ENCODE measurements at regions of chr20 and their contacts with region 1.

Region 1: GRCh38 chr20:833450-834150 is at the start of gene FAM110A:
- DNase-seq: peak; percentile 98
- ATAC-seq: peak; percentile 89
- H3K4me3 Mint-ChIP-seq: peak within 1 kb of the TSS; percentile 88
- H3K27ac Mint-ChIP-seq: peak within 1 kb of the TSS; percentile 86
- H3K4me1 Mint-ChIP-seq: peaks cover 38% of the 10 kb centered on the region
- H3K27me3 Mint-ChIP-seq: no peaks in the 10 kb centered on the region
- total RNA-seq, gene FAM110A: 15.5 TPM

Region 2: GRCh38 chr20:653110-653589 is 180.4 kb before region 1 on chr20 and contains the start of gene SRXN1:
- CTCF ChIA-PET with region 1: interaction called, 4 read pairs
- POLR2A ChIA-PET with region 1: no interaction called
- intact Hi-C with region 1: loop called in 1 of 2 experiments (anchors 1 kb)
- DNase-seq: peak; percentile 91
- ATAC-seq: peak; percentile 93
- H3K4me3 Mint-ChIP-seq: peak within 1 kb of the TSS; percentile 76
- H3K27ac Mint-ChIP-seq: peak within 1 kb of the TSS; percentile 80
- H3K4me1 Mint-ChIP-seq: peaks cover 24% of the 10 kb centered on the region
- H3K27me3 Mint-ChIP-seq: peaks cover 8% of the 10 kb centered on the region
- total RNA-seq, gene SRXN1: 12.6 to 13.5 TPM

Region 3: DNA sequence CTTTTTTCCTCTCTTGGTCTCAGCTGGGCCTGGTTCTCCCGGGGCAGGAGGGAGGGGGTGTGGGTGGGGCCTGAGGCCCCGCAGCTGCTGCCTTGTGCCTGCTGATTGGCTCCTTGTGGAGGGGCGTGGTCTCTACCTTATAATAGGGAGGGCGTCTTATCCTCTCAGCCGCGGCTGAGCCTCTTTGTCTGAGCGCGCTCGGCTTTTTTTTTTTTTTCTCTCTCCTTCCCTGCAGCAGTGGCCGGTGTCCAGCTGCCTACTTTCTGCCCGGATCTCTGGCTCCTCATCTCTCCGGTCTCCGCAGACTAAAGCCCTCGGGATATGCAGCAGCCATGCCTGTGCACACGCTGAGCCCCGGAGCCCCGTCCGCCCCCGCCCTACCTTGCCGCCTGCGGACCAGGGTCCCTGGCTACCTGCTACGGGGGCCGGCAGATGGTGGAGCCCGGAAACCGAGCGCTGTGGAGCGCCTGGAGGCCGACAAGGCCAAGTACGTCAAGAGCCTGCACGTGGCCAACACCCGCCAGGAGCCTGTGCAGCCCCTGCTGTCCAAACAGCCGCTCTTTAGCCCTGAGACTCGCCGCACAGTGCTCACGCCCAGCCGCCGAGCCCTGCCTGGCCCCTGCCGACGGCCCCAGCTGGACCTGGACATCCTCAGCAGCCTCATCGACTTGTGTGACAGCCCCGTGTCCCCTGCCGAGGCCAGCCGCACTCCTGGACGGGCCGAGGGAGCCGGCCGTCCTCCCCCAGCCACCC is 11.0 kb after region 1 on chr20:
- CTCF ChIA-PET with region 1: interaction called, 10 read pairs
- POLR2A ChIA-PET with region 1: interaction called, 6 read pairs
- intact Hi-C with region 1: loop called (anchors 1 kb)
- DNase-seq: peak; percentile 93
- ATAC-seq: peak; percentile 95
- H3K4me3 Mint-ChIP-seq: peak overlapping the region; percentile 72
- H3K27ac Mint-ChIP-seq: peak overlapping the region; percentile 19
- H3K4me1 Mint-ChIP-seq: peaks cover 45% of the 10 kb centered on the region
- H3K27me3 Mint-ChIP-seq: no peaks in the 10 kb centered on the region

Region 4: GRCh38 chr20:1118336-1119127 is 284.9 kb after region 1 on chr20 and contains the start of gene PSMF1:
- CTCF ChIA-PET with region 1: interaction called, 3 read pairs
- POLR2A ChIA-PET with region 1: no interaction called
- intact Hi-C with region 1: loop called (anchors 1 kb)
- DNase-seq: peak; percentile 97
- ATAC-seq: peak; percentile 97
- H3K4me3 Mint-ChIP-seq: peak within 1 kb of the TSS; percentile 94
- H3K27ac Mint-ChIP-seq: peak within 1 kb of the TSS; percentile 93
- H3K4me1 Mint-ChIP-seq: peaks cover 49% of the 10 kb centered on the region
- H3K27me3 Mint-ChIP-seq: no peaks in the 10 kb centered on the region
- total RNA-seq, gene PSMF1: 143 to 178 TPM

Region 5: DNA sequence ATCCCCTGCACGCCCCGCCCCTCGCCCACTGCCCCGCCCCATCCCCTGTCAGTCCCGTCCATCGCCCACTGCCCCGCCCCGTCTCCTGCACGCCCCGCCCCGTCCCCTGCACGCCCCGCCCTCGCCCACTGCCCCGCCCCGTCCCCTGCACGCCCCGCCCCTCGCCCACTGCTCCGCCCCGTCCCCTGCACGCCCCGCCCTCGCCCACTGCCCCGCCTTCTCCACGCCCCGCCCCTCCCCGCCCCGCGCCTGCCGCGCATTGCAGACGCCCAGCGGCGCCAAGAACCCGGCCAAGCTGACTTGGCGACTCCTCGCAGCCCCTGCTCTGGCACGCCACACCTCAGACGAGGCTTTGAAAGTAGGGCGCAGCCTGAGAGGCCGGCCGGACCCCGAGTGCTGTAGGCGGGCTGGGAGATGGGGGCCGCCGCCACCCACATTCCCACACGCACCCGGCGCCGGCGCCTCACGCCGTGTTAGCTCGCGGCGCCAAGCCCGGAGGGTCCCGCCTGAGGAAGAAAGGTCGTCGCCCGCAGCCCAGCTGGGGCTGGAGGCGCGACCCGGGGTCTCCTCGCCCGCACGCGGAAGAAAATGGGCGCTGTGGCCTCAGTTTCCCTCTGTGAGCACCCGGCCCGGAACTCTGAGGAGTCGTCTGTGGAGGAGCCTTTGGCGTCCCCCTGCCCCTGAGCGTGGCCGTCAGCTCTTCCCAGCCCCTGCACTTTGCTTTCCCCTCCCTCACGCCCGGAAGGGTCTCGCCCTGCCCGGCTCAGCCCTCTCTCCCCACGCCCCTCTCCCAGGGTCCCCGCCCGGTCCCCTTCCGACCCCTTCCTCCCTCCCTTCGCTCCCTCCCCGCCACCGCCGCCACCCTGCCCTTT is 392.4 kb after region 1 on chr20 and contains the start of gene RAD21L1:
- CTCF ChIA-PET with region 1: no interaction called
- POLR2A ChIA-PET with region 1: no interaction called
- intact Hi-C with region 1: loop called in 1 of 2 experiments (anchors 2 kb)
- DNase-seq: peak; percentile 94
- ATAC-seq: peak; percentile 85
- H3K4me3 Mint-ChIP-seq: peak within 1 kb of the TSS; percentile 75
- H3K27ac Mint-ChIP-seq: peak within 1 kb of the TSS; percentile 79
- H3K4me1 Mint-ChIP-seq: peaks cover 11% of the 10 kb centered on the region
- H3K27me3 Mint-ChIP-seq: peaks cover 9% of the 10 kb centered on the region
- total RNA-seq, gene RAD21L1: 0.32 TPM in 1 of 2 experiments, not detected in the other

Region 6: GRCh38 chr20:1663917-1664316 is 830.3 kb after region 1 on chr20:
- CTCF ChIA-PET with region 1: no interaction called
- POLR2A ChIA-PET with region 1: no interaction called
- intact Hi-C with region 1: loop called in 1 of 2 experiments (anchors 10 kb)
- DNase-seq: peak; percentile 46
- ATAC-seq: peak; percentile 55
- H3K4me3 Mint-ChIP-seq: peak overlapping the region; percentile 47
- H3K27ac Mint-ChIP-seq: peak overlapping the region; percentile 98
- H3K4me1 Mint-ChIP-seq: peaks cover 96% of the 10 kb centered on the region
- H3K27me3 Mint-ChIP-seq: no peaks in the 10 kb centered on the region

Measured in activated CD4-positive, alpha-beta T cell treated with anti-CD3 and anti-CD28 coated beads for 36 hours (primary cell).